Heart right ventricle (tissue), 16 donors: ENCODE measurements at regions of chr7 and their contacts with region 1.

Region 1: GRCh38 chr7:138575897-138576428 is 115.9 kb downstream of the TRIM24 start:
- DNase-seq: no peak
- ATAC-seq: no peak
- H3K4me3 ChIP-seq: no peak overlapping the region
- H3K27ac ChIP-seq: no peak overlapping the region
- H3K4me1 ChIP-seq: no peaks in the 10 kb centered on the region
- H3K27me3 ChIP-seq: no peaks in the 10 kb centered on the region
- CTCF ChIP-seq: no peak

Region 2: DNA sequence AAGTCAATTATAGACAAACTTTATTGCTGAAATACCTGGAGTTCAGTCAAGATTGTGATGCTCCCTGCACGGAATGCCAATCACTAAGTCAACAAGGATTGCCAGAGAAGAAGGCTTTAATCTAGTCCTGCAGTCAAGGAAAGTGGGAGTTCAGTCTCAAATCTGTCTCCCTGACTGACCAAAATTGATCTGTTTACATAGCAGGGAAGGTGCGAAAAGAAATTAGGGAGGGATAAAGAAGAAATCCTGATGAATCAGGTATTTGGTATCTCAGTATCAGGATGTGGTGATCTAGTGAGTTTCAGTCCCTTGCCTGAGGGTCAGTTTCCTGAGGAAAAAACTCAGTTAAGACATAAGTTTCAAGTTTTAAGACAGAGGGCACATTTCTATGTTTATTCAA is 501.8 kb before region 1 on chr7:
- intact Hi-C with region 1: no loop called
- DNase-seq: no peak
- ATAC-seq: no peak
- H3K4me3 ChIP-seq: no peak overlapping the region
- H3K27ac ChIP-seq: no peak overlapping the region
- H3K4me1 ChIP-seq: no peaks in the 10 kb centered on the region
- H3K27me3 ChIP-seq: no peaks in the 10 kb centered on the region
- CTCF ChIP-seq: no peak

Region 3: DNA sequence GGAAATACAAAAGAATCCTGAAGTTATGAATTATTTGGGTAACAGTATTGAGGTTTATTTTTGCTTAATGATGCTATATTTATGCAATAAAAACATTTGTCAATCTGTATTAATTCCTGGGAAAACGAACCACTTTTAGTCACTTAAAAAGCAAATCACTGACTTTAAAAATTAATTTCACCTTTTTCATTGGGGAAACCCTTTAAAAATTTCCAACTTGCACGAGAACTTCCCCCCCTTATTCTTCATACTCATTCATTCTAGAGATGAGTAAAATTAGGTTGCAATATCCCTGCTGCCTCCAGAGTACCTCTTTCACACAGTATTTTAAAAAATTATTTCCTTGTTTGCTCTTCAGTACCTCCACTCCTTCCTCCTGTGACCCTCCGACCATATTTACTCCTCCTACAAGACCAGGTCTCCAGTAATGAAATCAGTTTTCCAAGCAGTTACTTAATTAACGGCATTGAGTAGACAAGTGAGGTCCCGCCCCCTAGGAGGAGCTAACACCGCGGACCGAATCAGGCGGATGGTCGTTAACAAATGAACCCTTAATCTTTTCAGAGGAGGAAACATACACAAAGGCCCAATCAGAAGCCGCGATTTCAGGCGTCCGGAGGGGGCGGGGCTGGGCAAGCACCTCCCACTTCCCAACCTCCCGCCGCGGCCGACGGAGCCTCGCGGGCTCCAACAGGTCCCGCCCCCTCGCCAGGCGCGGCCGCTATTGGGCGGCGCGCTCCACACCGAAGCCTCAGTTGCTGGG is 116.4 kb before region 1 on chr7:
- intact Hi-C with region 1: loop called in 1 of 10 experiments (anchors 10 kb)
- DNase-seq: peak in 1 of 2 donors; percentile 97
- ATAC-seq: peak; percentile 97 to 99 (median 98)
- H3K4me3 ChIP-seq: peak overlapping the region in 7 of 10 donors; percentile 79 to 96 (median 87)
- H3K27ac ChIP-seq: peak overlapping the region in 5 of 10 donors; percentile 48 to 99 (median 98)
- H3K4me1 ChIP-seq: peaks cover 0 to 21% (median 10%) of the 10 kb centered on the region in 9 donors
- H3K27me3 ChIP-seq: no peaks in the 10 kb centered on the region
- CTCF ChIP-seq: peak in 7 of 9 donors; percentile 12 to 46 (median 20)